ENCODE measurements at regions of chr17 and their contacts with region 1.

Region 1: DNA sequence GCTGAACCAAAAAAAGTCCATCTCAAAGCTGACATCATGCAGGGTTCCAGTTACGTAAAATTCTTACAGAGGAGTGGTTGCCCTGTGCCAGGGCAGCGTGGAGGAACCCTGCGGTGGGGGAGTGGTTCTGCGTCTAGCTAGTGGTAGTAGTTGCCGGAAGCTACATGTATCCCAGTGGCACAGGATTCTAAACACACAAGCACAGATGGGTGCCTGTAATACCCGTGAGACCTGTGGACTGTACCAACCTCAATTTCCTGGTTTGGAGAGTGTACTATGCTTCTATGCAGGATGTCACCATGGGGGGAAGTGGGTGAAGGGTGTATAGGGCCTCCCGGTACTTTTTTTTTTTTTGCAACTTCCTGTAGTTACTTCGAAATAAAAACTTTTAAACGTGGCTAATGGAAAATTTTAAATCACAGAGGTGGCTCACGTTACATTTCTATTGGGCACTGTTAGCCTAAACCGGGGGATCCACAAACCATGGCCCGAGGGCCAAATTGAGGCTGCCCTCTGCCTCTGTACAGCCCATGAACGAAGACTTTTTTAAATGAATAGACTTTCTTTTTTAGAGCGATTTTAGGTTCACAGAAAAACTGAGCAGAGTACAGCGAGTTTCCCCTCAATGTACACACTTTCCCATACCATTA is 38.5 kb downstream of the TBC1D16 start:
- DNase-seq: peak; percentile 88
- ATAC-seq: peak; percentile 88
- H3K4me3 Mint-ChIP-seq: peak overlapping the region; percentile 60
- H3K27ac Mint-ChIP-seq: peak overlapping the region; percentile 98
- H3K4me1 Mint-ChIP-seq: peaks cover 53% of the 10 kb centered on the region
- H3K27me3 Mint-ChIP-seq: no peaks in the 10 kb centered on the region

Region 2: DNA sequence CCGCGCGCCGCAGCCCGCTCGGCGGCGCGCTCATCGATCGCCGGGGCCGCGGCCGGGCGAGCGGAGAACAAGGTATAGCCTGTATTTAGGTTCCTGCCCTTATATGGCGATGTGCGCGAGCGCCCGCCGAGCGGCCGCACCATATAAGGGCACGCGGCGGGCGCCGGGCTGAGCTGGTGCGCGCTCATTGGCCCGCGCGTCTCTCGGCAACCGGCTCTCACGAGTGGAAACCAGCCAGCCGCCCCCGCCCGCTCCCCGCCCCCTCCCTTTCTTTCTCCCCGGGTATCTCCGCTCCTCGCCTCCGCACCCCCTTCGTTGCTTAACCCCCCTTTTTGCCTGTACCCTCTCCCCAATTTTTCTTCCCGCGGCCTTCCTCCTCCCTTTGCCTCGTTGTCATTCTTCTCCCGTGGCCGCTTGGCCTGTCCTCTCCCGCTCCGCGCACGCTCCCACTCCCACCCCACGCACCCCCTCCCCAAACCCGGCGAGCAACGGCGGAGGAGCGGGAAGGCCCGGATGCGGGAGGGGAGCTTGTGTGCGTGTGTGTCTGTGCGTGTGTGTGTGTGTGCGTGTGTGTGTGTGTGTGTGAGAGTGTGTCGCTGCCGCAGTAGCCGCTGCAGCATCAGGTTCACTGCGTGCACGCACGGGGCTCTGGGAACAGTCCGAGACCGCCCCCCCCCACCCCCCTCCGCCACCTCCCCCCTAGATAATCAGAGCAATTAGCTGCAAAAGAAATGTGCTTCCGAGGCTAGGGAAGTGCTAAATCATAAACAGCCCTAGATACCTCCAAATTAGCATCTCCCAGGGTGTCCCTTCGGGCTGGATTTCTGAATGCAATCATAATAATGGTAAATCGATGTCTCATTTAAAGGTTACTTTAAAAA is 186.8 kb before region 1 on chr17:
- CTCF ChIA-PET with region 1: interaction called, 4 read pairs
- POLR2A ChIA-PET with region 1: no interaction called
- intact Hi-C with region 1: loop called in 1 of 2 experiments (anchors 1 kb)
- DNase-seq: peak; percentile 90
- ATAC-seq: peak; percentile 90
- H3K4me3 Mint-ChIP-seq: peak overlapping the region; percentile 18
- H3K27ac Mint-ChIP-seq: no peak overlapping the region
- H3K4me1 Mint-ChIP-seq: peaks cover 39% of the 10 kb centered on the region
- H3K27me3 Mint-ChIP-seq: peaks cover 59% of the 10 kb centered on the region

Region 3: DNA sequence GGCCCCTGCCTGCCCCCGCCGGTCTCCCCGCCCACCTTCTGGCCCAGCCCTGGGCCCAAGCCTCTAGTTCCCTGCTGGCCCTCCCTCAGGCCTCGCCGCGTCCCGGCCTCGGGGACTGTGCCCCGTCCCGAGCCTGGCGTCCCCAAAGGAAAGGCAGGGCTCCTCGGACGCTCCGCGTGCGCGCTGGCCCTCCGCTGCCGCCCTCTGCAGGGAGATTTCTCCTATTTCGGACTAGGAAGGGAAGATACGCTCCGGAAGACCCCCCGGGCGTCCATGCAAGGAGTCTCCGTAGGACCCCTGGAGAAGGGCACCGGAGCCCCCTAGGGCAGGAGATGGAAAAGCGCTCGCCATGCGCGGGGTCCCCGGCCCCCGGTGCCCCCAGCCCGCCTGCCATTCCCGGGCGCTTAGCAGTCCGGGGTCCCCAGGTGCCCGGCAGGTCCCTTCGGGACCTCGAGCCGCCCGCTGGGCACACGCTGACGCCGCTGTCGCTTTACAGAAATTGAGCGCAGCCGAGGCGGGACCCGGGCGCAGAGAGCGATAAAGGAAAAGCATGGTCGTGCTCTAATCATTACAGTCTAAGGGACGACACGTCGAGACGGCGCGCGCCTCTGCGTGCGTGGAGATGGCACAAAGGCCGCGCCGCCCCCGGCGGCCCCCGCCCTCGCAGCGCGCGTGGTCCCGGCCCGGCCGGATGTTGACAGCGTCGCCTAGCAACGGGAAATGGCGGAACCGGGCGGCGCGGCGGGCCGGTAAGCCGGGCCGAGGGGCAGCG is 39.0 kb after region 1 on chr17 and contains the start of gene CCDC40:
- CTCF ChIA-PET with region 1: interaction called, 3 read pairs
- POLR2A ChIA-PET with region 1: no interaction called
- intact Hi-C with region 1: loop called in 1 of 2 experiments (anchors 1 kb)
- DNase-seq: peak; percentile 82
- ATAC-seq: peak; percentile 72
- H3K4me3 Mint-ChIP-seq: peak within 1 kb of the TSS; percentile 82
- H3K27ac Mint-ChIP-seq: no peak within 1 kb of the TSS
- H3K4me1 Mint-ChIP-seq: peaks cover 7% of the 10 kb centered on the region
- H3K27me3 Mint-ChIP-seq: peaks cover 12% of the 10 kb centered on the region
- total RNA-seq, gene CCDC40: 0.56 to 0.57 TPM

Region 4: DNA sequence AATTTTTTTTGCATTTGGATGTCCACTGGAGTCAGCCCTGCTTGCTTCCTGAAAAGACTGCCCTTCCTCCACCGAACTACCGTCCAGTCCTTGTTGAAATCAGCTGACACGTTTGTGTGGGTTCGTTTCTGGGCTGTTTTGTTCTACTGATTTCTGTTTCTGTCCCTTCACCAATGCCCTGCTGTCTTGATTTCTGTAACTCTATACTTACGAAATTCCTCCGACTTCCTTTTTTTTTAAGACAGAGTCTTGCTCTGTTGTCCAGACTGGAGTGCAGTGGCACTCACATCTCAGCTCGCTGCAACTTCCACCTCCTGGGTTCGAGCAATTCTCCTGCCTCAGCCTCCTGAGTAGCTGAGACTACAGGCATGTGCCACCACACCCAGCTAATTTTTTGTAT is 95.8 kb after region 1 on chr17:
- CTCF ChIA-PET with region 1: no interaction called
- POLR2A ChIA-PET with region 1: no interaction called
- intact Hi-C with region 1: no loop called
- DNase-seq: no peak
- ATAC-seq: no peak
- H3K4me3 Mint-ChIP-seq: no peak overlapping the region
- H3K27ac Mint-ChIP-seq: no peak overlapping the region
- H3K4me1 Mint-ChIP-seq: no peaks in the 10 kb centered on the region
- H3K27me3 Mint-ChIP-seq: no peaks in the 10 kb centered on the region

Region 5: DNA sequence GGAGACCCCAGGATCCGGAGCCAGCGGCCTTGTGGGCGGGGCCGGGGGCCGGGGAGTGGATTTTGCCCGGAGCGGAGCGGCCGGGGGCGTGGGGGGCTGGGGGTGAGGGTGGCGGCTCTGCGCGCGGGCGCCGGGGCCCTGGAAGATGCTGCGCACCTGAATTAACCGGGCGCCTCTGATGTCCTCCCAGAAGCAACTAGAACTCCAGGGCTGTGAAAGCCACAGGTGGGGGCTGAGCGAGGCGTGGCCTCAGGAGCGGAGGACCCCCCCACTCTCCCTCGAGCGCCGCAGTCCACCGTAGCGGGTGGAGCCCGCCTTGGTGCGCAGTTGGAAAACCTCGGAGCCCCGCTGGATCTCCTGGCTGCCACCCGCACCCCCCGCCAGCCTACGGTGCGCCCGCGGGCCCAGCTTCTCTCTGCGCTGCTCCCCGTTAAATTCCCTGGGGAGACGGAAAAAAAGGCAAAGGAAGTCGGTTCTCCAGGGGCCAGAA is 223.6 kb after region 1 on chr17:
- CTCF ChIA-PET with region 1: no interaction called
- POLR2A ChIA-PET with region 1: no interaction called
- intact Hi-C with region 1: no loop called
- DNase-seq: peak; percentile 34
- ATAC-seq: no peak
- H3K4me3 Mint-ChIP-seq: peak overlapping the region; percentile 64
- H3K27ac Mint-ChIP-seq: no peak overlapping the region
- H3K4me1 Mint-ChIP-seq: peaks cover 31% of the 10 kb centered on the region
- H3K27me3 Mint-ChIP-seq: no peaks in the 10 kb centered on the region